ENCODE measurements at regions of chr1 and their contacts with region 1.

Region 1: DNA sequence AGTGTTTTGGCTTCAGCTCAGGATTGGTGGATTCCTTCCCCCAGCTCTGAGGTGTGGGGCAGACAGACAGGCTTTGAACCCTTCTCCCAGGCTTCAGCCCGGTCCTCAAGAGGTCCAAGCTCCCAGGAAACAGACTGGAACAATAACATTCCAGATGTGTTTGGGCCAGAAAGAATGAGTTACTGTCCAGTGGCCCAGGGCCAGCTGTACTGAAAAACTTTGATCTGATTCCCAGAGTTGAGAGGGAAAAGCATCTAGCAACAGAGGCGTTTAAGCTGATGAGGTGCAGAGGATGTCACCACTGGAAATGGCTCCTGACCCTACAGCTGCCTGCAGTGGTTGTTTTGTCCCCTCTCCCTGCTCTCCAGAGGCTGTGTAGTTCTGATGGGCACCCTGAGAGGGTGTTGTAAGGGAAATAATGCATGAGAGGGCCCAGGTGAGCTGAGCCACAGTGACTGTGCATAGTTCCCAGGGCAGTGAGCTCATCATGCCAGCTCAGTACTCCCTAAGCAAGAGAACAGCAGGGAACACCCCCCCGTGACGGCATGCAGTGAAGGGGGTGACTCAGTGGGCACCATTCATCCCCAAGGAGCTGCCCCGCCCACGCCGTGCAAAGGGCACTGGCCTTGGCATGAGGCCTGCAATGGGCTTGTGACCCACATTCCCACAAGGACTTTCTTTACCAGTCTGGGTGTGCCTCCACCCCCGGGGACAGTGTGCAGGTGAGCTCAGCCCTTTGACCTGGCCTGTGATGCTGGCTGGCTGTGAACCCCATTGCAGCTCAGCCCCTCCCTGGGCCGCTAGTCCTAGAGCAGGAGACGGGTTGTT is 13.8 kb upstream of the SFN start:
- DNase-seq: peak; percentile 84 to 95
- ATAC-seq: peak; percentile 87 to 90
- H3K4me3 ChIP-seq: no peak overlapping the region
- H3K27ac ChIP-seq: peak overlapping the region; percentile 94 to 97
- H3K4me1 ChIP-seq: peaks cover 54% of the 10 kb centered on the region
- CTCF ChIP-seq: no peak
- EP300 ChIP-seq: peak; percentile 31 to 66; a peak in 2 of 5 replicates
- POLR2A ChIP-seq: no peak
- RAD21 ChIP-seq: no peak

Region 2: GRCh38 chr1:26833432-26834405 is 15.4 kb before region 1 on chr1:
- CTCF ChIA-PET with region 1: interaction called, 15 read pairs
- POLR2A ChIA-PET with region 1: no interaction called
- DNase-seq: no peak
- ATAC-seq: peak in 1 of 2 experiments; percentile 29; a peak in 2 of 6 replicates
- H3K4me3 ChIP-seq: no peak overlapping the region
- H3K27ac ChIP-seq: no peak overlapping the region
- H3K4me1 ChIP-seq: peaks cover 12% of the 10 kb centered on the region; the same call in 2 of the 3 replicates
- CTCF ChIP-seq: no peak
- EP300 ChIP-seq: no peak
- POLR2A ChIP-seq: no peak
- RAD21 ChIP-seq: no peak

Region 3: DNA sequence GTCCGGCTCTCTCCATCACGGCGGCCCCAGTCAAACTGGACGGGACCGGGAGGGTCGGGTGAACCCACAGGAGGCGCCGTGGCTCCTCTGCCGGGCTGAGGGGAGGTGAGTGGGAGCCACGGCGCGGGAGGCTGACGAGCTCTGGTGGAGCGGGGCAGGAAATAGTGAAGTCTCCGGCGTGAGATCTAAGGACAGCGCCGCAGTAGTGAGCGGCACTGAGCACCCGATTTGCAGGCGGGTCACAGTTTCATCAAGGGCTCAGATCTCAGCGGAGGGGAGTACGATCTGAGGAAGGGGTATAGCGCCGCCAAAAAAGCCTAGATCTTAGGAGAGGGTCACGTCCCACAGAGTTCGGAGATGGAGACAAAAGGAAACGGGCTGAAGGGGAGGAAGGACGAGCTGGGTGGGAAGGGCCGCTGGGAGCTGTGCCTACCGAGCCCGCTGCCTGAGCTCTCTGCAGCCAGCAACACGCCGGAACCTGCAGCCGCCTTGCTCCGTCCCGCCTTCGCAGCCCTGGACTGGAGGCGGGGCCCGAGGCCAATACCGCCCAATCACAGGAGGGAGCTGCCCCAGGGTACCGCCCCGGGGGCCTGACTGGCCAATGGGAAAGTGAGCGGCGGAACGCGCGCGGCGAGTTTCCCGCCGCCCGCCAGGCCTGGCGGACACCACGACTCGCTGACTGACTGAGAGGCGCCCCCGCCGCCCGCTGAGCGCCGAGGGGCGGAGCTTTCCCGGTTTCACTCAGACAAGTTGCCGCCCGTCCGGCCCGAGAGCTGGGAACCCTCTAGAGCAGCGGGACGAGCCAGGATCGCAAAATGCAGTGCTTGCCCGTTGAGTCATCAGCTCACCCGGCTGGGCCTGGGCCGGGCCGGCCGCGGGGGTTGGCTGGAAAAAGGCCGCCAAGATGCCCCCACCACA is 15.7 kb after region 1 on chr1:
- CTCF ChIA-PET with region 1: interaction called, 57 read pairs
- POLR2A ChIA-PET with region 1: interaction called, 18 read pairs
- DNase-seq: peak; percentile 65 to 96
- ATAC-seq: peak; percentile 76 to 89
- H3K4me3 ChIP-seq: peak overlapping the region; percentile 66
- H3K27ac ChIP-seq: peak overlapping the region; percentile 99 to 100
- H3K4me1 ChIP-seq: peaks cover 30% of the 10 kb centered on the region
- CTCF ChIP-seq: no peak
- EP300 ChIP-seq: no peak
- POLR2A ChIP-seq: peak; percentile 98
- RAD21 ChIP-seq: no peak

Region 4: GRCh38 chr1:26972390-26972789 is 123.2 kb after region 1 on chr1:
- CTCF ChIA-PET with region 1: no interaction called
- POLR2A ChIA-PET with region 1: no interaction called
- DNase-seq: no peak
- ATAC-seq: peak; percentile 19 to 37; a peak in 1 of 6 replicates
- H3K4me3 ChIP-seq: no peak overlapping the region
- H3K27ac ChIP-seq: peak overlapping the region; percentile 35 to 73; a peak in 4 of 6 replicates
- H3K4me1 ChIP-seq: peaks cover 28% of the 10 kb centered on the region; the same call in 2 of the 3 replicates
- CTCF ChIP-seq: no peak
- EP300 ChIP-seq: no peak
- POLR2A ChIP-seq: no peak
- RAD21 ChIP-seq: no peak

Region 5: GRCh38 chr1:27045973-27046558 is 196.9 kb after region 1 on chr1:
- CTCF ChIA-PET with region 1: no interaction called
- POLR2A ChIA-PET with region 1: no interaction called
- DNase-seq: peak; percentile 58 to 66
- ATAC-seq: peak; percentile 79 to 82
- H3K4me3 ChIP-seq: no peak overlapping the region
- H3K27ac ChIP-seq: peak overlapping the region in 1 of 2 experiments; percentile 46; a peak in 1 of 6 replicates
- H3K4me1 ChIP-seq: 0 out of 3 replicates have a peak, but pooled peaks cover 4% of the 10 kb centered on the region
- CTCF ChIP-seq: peak; percentile 76
- EP300 ChIP-seq: no peak
- POLR2A ChIP-seq: no peak
- RAD21 ChIP-seq: peak; percentile 45 to 52; a peak in 4 of 5 replicates

Measured in A549 (cell line).